GM10248 (cell line): ENCODE measurements at regions of chr16 and their contacts with region 1.

Region 1: DNA sequence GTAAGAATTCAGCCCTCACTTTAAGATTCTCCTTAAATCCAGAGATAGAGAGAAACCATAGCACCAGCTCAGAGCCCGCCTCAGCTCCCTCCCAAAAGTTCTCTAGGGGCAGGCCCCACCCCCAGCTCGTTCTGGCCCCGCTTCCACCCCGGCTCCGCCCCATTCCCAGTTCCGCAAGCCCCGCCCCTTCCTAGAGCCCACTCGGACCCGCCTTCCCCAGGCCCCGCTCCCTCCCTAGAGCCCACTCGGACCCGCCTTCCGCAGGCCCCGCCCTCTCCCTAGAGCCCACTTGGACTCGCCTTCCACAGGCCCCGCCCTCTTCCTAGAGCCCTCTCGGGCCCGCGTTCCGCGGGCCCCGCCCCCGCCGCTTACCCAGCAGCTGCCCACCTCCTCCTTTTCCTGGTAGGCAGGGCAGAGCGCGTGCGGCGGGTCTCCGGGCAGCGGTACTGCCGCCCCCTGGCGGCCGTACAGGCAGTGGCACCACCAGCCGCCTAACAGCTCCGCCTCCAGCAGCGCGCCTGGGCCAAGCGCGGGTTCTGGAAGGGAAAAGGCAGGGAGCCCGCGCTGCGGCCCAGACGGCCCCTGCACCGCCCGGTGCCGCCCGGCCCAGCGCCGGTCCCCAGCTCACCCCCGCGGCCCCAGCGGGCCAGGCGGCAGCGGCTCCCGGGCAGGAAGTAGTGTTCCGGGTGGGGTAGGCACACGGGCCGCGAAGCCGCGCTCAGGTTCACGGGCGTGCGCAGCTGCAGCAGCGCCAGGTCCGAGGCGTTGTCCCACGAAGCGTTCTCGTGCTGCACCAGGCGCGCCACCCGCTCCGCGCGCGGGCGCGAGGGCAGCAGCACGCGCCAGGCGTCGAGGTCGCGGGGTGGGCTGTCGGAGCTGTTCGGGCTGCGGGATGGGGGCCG is 6.8 kb upstream of the PRSS8 start:
- DNase-seq: peak; percentile 100
- CTCF ChIP-seq: peak; percentile 97

Region 2: DNA sequence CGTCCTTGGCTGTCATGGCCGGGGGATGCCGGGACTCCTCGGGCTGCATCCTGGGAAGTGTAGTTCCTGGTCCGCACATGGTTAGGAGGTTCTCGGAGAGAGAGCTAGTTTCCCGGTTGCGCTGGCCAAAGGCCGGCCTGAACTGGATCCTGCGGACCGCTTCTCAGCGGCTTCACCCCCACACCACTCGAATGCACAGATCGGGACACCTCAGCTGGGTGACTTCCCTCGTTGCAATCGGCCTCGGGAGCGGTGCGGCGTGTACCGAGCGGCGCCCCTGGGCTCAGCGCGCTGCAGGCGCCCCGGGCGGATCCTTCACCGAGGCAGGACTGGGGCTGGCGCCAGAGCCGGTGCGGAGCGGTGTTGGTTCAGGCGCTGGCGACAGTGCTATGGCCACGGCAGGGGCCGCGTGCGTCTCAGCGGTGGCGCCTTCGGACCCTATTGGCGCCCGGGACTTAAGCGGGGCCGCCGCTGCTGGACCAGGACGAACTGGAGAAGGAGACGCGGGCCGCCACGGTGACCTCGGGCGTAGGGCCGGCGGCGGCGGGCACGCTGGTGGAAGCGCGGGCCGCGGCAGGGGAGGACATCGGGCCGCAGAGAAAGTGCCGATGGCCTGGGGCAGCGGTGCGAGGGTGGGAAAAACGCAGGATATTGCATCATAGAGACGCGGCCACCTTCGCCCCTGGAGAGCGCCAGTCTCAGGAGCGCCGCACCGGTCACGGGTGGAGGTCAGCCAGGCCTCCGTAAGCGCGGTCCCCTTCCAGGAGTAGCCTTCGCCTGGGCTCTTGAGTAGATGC is 366.8 kb before region 1 on chr16:
- CTCF ChIA-PET with region 1: no interaction called
- POLR2A ChIA-PET with region 1: no interaction called
- DNase-seq: peak; percentile 87
- CTCF ChIP-seq: no peak

Region 3: DNA sequence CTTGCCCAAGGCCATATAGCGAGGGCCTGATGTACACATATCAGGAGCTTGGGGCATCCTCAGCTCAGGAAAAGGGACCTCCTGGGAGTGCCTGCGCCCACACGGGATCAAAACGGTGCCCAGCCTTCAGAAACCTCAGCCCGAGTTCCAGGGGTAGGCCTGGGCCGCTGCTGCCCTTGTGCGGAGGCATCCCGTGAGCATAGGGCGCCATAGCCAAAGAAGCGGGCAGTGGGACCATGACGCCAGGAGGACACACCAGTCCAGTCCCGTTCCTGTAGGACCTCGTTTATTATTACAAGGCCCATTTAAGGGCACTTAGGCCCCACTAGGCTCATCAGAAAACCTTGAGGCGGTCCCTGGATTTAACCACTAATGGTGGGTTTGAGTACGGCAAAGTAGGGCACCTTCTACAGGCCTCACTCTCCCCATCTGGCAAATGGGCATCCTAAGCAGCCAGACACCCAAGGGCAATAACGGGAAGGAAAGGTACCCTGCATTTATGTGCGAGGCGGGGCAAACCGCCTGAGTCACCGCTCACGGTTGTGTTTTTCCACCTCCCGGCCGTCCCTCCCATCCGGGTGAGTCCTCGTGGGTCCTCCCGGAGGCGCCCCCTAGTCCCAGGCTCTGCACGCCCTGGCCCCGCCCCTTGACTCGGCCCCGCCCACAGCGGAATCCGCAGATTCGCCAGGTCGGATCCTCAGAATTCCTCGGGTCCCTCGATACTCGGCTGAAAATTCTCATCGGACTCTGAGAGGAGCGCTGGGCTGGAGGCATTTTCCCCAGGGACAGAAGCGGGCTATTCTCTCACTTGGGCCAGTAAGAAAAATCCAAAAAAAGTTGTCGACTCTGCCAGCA is 185.5 kb before region 1 on chr16:
- CTCF ChIA-PET with region 1: interaction called, 13 read pairs
- POLR2A ChIA-PET with region 1: no interaction called
- DNase-seq: peak; percentile 87
- CTCF ChIP-seq: peak; percentile 38

Region 4: DNA sequence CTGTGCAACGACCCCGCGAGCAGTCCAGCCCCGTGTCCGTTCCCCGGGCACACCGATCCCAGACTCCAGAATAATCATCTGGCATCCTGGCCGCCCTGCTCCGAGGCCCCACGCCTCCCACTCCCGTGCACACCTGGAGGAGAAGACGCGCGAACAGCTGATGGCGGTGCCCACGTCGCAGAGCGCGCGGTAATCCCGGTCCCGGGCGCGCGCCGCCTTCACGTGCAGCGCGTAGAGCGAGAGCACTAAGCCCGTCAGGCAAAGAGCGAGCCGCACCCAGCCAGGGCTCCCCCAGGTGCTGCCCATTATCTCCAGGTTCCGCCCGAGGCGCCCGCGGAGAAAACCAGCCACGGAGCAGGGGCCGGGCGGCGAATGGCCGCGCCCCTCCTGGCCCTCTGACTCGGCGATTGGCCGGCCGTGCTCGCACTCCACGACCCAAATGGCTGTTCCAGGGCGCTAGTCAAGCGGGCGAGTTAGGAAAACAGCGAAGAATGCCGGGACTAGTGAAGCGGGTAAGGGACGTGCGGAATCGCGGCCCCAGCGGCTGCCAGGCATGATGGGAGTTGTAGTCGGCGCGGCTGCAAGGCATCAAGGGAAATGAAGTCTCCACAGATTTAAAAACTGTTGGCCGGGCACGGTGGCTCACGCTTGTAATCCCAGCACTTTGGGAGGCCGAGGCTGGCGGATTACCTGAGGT is 47.8 kb before region 1 on chr16 and contains the start of gene VKORC1:
- CTCF ChIA-PET with region 1: interaction called, 21 read pairs
- POLR2A ChIA-PET with region 1: no interaction called
- DNase-seq: peak; percentile 91
- CTCF ChIP-seq: no peak

Region 5: DNA sequence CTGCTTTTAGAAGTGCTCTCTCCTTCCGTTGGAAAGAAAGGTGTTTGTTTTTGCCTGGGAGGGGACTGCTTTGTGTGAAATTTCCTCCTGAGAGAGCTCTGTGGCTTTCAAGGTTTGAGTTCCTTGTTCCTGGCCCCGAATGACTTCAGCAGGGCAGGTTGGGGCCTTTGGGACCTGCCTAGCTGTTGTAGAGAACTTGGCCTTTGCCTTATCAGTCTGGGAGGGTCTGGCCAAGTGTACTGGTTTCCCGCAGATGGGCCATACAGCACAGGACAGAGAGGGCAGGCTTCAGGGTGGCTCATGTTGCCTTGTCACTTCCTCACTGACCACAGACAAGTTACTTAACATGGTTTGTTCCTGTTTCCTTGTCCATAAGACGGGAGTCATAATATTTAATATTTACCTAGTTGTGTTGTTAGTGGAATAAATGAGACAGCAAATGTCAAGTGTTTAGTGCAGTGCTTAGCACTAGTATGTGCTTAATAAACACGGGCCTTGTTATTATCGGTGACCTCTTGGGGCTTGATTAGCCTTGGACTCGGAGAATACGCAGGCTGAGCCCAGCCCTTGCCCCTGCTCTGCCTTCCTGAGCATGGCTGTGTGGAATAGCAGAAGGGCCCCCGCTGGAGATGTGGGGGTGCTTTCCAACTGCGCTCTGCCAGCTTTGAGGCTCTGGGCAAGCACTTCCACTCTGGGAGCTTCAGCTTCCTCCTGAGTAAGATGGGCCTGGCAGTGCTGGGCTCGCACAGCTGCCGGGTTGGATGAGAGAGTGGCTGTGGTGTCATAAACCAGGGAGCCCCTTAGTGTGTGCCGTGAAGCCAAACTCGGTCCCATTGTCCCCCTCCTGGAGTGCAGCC is 13.4 kb before region 1 on chr16:
- CTCF ChIA-PET with region 1: interaction called, 68 read pairs
- POLR2A ChIA-PET with region 1: interaction called, 3 read pairs
- DNase-seq: no peak
- CTCF ChIP-seq: no peak

Region 6: GRCh38 chr16:31167315-31167714 is 25.0 kb after region 1 on chr16:
- CTCF ChIA-PET with region 1: interaction called, 60 read pairs
- POLR2A ChIA-PET with region 1: no interaction called
- DNase-seq: no peak
- CTCF ChIP-seq: no peak

Region 7: GRCh38 chr16:31273676-31274075 is 131.3 kb after region 1 on chr16:
- CTCF ChIA-PET with region 1: no interaction called
- POLR2A ChIA-PET with region 1: no interaction called
- DNase-seq: peak; percentile 7
- CTCF ChIP-seq: no peak

Region 8: DNA sequence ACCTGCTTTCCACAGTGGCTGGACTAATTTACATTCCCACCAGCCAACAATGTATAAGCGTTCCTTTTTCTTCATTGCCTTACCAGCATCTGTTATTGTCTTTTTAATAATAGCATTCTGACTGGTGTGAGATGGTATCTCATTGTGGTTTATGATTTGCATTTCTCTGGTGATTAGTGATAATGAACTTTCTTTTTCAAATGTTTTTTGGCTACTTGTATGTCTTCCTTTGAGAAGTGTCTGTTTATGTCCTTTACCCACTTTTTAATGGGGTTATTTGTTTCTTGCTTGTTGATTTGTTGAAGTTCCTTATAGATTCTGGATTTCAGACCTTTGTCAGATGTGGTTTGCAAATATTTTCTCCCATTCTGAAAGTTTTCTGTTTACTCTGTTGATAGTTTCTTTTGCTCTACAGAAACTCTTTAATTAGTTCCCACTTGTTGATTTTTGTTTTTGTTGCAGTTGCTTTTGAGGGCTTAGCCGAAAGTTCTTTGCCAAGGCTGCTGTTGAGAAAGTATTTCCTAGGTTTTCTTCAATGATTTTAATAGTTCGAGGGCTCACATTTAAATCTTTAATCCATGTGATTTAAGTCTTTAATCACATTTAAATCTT is 144.2 kb after region 1 on chr16:
- CTCF ChIA-PET with region 1: no interaction called
- POLR2A ChIA-PET with region 1: no interaction called
- DNase-seq: no peak
- CTCF ChIP-seq: no peak